Prostate gland (tissue), 2 donors: ENCODE measurements at regions of chr4 and their contacts with region 1.

Region 1: DNA sequence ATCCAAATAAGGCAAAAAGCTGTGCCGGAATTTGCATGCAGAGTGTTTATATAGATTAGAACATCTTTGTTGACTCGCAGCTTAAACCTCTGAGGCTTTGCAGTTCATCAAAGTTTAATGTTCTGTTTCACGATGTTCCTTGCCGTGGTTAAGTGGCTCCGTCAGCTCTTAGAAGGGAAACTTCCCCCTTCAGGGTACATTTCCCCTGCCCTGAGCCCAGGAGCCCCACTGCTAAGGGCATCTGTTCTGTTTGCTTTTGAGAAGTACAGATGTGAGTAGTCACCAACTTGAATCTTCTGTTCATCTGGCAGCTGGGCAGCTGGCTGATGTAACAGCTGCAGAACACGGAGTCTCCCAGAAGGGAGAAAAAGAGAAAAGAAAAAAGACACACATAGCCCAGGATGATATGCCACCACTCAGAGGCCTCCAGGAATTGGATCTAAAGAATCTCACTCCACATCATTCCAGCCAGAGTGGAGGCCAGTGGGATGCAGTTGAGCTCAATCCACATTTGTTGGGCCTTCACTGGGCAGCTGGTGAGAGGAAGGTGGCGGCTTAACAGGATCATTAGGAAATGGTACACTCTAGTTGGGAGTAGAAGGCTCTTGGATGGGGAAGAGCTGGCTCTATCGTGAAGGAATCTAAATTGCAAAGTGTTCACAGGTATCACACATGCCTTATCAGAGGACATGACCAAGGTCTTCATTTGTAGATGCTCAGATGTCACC is 178.7 kb upstream of the RBPJ start:
- DNase-seq: peak; percentile 65
- H3K4me3 ChIP-seq: no peak overlapping the region
- H3K27ac ChIP-seq: peak overlapping the region; percentile 65 to 89
- H3K4me1 ChIP-seq: peaks cover 17% of the 10 kb centered on the region
- H3K27me3 ChIP-seq: no peaks in the 10 kb centered on the region
- CTCF ChIP-seq: no peak
- POLR2A ChIP-seq: no peak

Region 2: DNA sequence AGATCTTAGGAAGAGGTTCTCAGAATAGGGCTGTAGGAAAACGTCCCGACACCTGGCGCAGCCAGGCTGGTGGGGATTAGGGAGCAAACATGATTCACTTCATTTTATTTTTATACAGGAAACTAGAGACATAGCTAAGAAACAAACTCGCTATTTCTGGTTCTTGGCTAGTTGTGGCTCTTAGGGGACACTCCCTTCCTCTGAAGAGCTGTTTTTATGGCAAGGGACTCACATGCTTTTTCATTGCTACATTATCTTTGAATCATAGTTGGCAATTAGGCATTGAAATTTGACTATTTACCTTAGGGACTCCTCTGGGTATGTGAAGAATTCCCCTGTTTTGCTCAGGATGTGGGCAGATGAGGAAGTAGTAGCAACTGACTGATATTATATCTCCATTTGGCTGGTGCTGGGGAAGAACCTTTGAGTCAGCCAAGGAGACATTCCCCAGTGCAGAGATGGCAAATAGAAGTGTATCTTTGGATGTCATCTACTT is 53.6 kb before region 1 on chr4:
- intact Hi-C with region 1: loop called (anchors 5 kb)
- DNase-seq: peak; percentile 33
- H3K4me3 ChIP-seq: no peak overlapping the region
- H3K27ac ChIP-seq: no peak overlapping the region
- H3K4me1 ChIP-seq: peaks cover 7% of the 10 kb centered on the region
- H3K27me3 ChIP-seq: no peaks in the 10 kb centered on the region
- CTCF ChIP-seq: no peak
- POLR2A ChIP-seq: no peak

Region 3: DNA sequence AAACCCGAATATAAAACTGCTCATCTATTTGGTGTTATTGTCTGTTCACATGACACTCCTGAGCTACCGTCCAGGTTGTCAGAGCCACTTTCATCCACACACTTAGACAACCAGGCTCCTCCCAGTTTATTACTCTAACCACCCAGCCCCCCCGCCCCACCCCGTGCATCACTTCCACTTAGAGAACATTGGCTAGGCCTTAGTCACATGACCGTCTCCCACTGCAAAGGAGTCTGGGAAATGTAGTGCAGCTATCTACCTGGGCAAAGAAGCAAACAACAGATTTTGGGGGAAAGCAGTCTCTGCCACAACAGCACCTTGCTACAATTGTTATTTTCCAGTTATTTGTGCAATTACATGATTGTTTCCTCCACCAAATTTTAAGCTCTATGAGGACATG is 121.1 kb after region 1 on chr4:
- intact Hi-C with region 1: no loop called
- DNase-seq: no peak
- H3K4me3 ChIP-seq: no peak overlapping the region
- H3K27ac ChIP-seq: no peak overlapping the region
- H3K4me1 ChIP-seq: no peaks in the 10 kb centered on the region
- H3K27me3 ChIP-seq: no peaks in the 10 kb centered on the region
- CTCF ChIP-seq: no peak
- POLR2A ChIP-seq: no peak

Region 4: DNA sequence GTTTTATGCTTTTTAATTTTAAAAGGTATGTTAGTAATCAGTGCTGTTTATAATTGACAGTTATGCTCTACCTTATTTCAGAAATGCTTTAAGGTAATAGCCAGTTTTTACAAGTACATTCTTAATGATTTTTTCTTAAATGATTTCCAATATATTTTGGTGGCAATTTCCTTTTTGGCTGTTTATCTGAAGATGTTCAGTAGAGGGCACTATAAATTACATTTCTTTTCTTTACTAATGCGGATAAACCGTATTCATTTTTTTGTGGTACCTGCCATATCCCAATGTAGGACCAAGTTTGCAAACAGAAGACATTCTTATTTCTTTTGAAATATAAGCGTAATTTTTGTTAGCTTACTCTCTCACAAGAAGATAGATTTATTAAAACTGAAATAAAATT is 282.8 kb after region 1 on chr4:
- intact Hi-C with region 1: no loop called
- DNase-seq: no peak
- H3K4me3 ChIP-seq: no peak overlapping the region
- H3K27ac ChIP-seq: no peak overlapping the region
- H3K4me1 ChIP-seq: no peaks in the 10 kb centered on the region
- H3K27me3 ChIP-seq: no peaks in the 10 kb centered on the region
- CTCF ChIP-seq: no peak
- POLR2A ChIP-seq: no peak